Naive thymus-derived CD4-positive, alpha-beta T cell (primary cell): ENCODE measurements at regions of chr14 and their contacts with region 1.

Region 1: GRCh38 chr14:35404449-35405303 is at the start of gene NFKBIA:
- DNase-seq: peak; percentile 91 to 99 (median 93)
- ATAC-seq: peak; percentile 79
- H3K4me3 ChIP-seq: peak within 1 kb of the TSS; percentile 85
- H3K4me3 Mint-ChIP-seq: peak within 1 kb of the TSS; percentile 92 to 97 (median 94)
- H3K27ac ChIP-seq: peak within 1 kb of the TSS; percentile 96
- H3K27ac Mint-ChIP-seq: peak within 1 kb of the TSS; percentile 96 to 99 (median 98)
- H3K4me1 ChIP-seq: peaks cover 42 to 43% of the 10 kb centered on the region in 2 donors
- H3K4me1 Mint-ChIP-seq: peaks cover 28 to 63% (median 53%) of the 10 kb centered on the region in 7 donors
- H3K27me3 ChIP-seq: no peaks in the 10 kb centered on the region
- H3K27me3 Mint-ChIP-seq: peaks cover 0 to 2% (median 0%) of the 10 kb centered on the region in 5 donors
- total RNA-seq, gene NFKBIA: 144 to 1,533 (median 246) TPM

Region 2: GRCh38 chr14:34714320-34715126 is 690.2 kb before region 1 on chr14 and contains the start of gene CFL2:
- CTCF ChIA-PET with region 1: no interaction called
- POLR2A ChIA-PET with region 1: interaction called, 3 read pairs
- intact Hi-C with region 1: loop called in 1 of 2 experiments (anchors 5 kb)
- DNase-seq: peak; percentile 41 to 85 (median 54)
- ATAC-seq: peak; percentile 86
- H3K4me3 ChIP-seq: peak within 1 kb of the TSS; percentile 62
- H3K4me3 Mint-ChIP-seq: peak within 1 kb of the TSS; percentile 89 to 97 (median 92)
- H3K27ac ChIP-seq: peak within 1 kb of the TSS; percentile 93
- H3K27ac Mint-ChIP-seq: peak within 1 kb of the TSS; percentile 85 to 95 (median 92)
- H3K4me1 ChIP-seq: peaks cover 4 to 6% of the 10 kb centered on the region in 2 donors
- H3K4me1 Mint-ChIP-seq: peaks cover 8 to 39% (median 27%) of the 10 kb centered on the region in 7 donors
- H3K27me3 ChIP-seq: no peaks in the 10 kb centered on the region
- H3K27me3 Mint-ChIP-seq: peaks cover 0 to 20% (median 0%) of the 10 kb centered on the region in 5 donors
- total RNA-seq, gene CFL2: 5.2 to 34.2 (median 11.7) TPM

Region 3: DNA sequence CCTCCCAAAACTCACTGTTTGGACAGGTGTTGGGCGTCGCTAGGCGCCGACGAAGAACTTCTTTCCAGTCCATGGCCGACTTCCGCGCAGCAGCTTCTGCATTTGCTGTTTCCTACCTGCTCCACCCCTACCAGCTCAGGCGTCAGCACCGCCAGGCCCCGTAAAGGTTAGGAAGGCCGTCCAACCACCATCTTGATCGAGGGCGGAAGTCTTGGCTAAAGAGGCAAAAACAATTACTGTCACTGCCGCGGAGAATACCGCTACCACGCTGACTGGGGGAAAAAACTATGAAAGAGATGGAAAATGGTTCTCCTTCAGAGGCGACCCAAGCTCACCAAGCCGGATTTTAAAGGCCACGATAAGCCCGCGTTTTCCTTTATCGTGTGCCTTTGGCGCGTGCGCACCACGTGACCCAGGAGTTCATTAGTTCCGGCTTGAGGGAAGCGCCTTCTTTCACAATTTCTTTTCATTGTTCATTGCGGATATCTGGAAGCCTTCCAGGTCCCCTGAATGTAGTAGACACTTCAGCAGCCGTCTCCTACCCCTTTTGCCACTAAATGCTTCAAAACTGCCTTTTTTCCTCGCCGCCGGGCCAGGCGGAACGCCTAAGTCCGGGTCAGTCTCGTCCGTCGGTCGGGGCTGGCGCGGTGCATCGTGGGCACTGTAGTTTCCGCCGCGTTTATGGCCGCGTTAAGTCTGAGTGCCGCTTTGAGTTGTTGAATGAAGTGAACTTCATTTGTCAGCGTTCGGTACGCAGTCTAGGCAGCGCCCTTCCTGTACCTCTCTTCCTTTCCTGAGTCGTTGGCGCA is 282.6 kb before region 1 on chr14 and contains the starts of genes PPP2R3C and PRORP:
- CTCF ChIA-PET with region 1: interaction called, 3 read pairs
- POLR2A ChIA-PET with region 1: interaction called, 65 read pairs
- intact Hi-C with region 1: loop called (anchors 1 kb)
- DNase-seq: peak; percentile 80 to 96 (median 93)
- ATAC-seq: peak; percentile 90
- H3K4me3 ChIP-seq: peak within 1 kb of the TSS; percentile 86
- H3K4me3 Mint-ChIP-seq: peak within 1 kb of the TSS; percentile 89 to 100 (median 99)
- H3K27ac ChIP-seq: peak within 1 kb of the TSS; percentile 97
- H3K27ac Mint-ChIP-seq: peak within 1 kb of the TSS; percentile 99 to 100 (median 100)
- H3K4me1 ChIP-seq: peaks cover 16 to 22% of the 10 kb centered on the region in 2 donors
- H3K4me1 Mint-ChIP-seq: peaks cover 39 to 85% (median 73%) of the 10 kb centered on the region in 7 donors
- H3K27me3 ChIP-seq: no peaks in the 10 kb centered on the region
- H3K27me3 Mint-ChIP-seq: peaks cover 0 to 3% (median 0%) of the 10 kb centered on the region in 5 donors
- total RNA-seq, gene PPP2R3C: 31.4 to 43.3 (median 33.5) TPM
- total RNA-seq, gene PRORP: 31.2 to 40.9 (median 38.4) TPM

Region 4: GRCh38 chr14:35261774-35262173 is 142.9 kb before region 1 on chr14:
- CTCF ChIA-PET with region 1: interaction called, 3 read pairs
- POLR2A ChIA-PET with region 1: interaction called, 5 read pairs
- intact Hi-C with region 1: loop called in 1 of 2 experiments (anchors 1 kb)
- DNase-seq: peak in 4 of 9 donors; percentile 2 to 23 (median 10)
- ATAC-seq: no peak
- H3K4me3 ChIP-seq: no peak overlapping the region
- H3K4me3 Mint-ChIP-seq: no peak overlapping the region
- H3K27ac ChIP-seq: no peak overlapping the region
- H3K27ac Mint-ChIP-seq: peak overlapping the region in 1 of 9 donors; percentile 25
- H3K4me1 ChIP-seq: no peaks in the 10 kb centered on the region
- H3K4me1 Mint-ChIP-seq: peaks cover 0 to 12% (median 0%) of the 10 kb centered on the region in 7 donors
- H3K27me3 ChIP-seq: no peaks in the 10 kb centered on the region
- H3K27me3 Mint-ChIP-seq: no peaks in the 10 kb centered on the region

Region 5: GRCh38 chr14:35331605-35332516 is 72.8 kb before region 1 on chr14:
- CTCF ChIA-PET with region 1: interaction called, 4 read pairs
- POLR2A ChIA-PET with region 1: interaction called, 17 read pairs
- intact Hi-C with region 1: loop called (anchors 1 kb)
- DNase-seq: no peak
- ATAC-seq: peak; percentile 49
- H3K4me3 ChIP-seq: no peak overlapping the region
- H3K4me3 Mint-ChIP-seq: peak overlapping the region in 4 of 10 donors; percentile 26 to 73 (median 48)
- H3K27ac ChIP-seq: peak overlapping the region; percentile 53
- H3K27ac Mint-ChIP-seq: peak overlapping the region; percentile 88 to 96 (median 91)
- H3K4me1 ChIP-seq: peaks cover 17 to 21% of the 10 kb centered on the region in 2 donors
- H3K4me1 Mint-ChIP-seq: peaks cover 20 to 30% (median 26%) of the 10 kb centered on the region in 7 donors
- H3K27me3 ChIP-seq: no peaks in the 10 kb centered on the region
- H3K27me3 Mint-ChIP-seq: no peaks in the 10 kb centered on the region

Region 6: DNA sequence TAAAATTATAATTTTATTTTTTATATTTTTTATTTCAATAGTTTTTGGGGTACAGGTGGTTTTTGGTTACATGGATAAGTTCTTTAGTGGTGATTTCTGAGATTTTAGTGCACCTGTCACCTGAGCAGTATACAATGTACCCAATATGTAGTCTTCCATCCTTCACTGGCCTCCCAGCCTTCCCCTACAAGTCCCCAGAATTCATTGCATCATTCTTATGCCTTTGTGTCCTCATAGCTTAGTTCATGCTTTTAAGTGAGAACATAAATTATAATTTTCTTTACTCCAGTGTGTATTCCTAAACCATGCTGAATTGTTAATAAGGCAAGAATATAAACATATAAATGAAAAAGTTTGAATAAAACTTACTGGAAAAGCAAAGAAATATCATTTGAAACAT is 18.9 kb after region 1 on chr14:
- CTCF ChIA-PET with region 1: interaction called, 12 read pairs
- POLR2A ChIA-PET with region 1: interaction called, 11 read pairs
- intact Hi-C with region 1: loop called (anchors 1 to 2 kb)
- DNase-seq: no peak
- ATAC-seq: no peak
- H3K4me3 ChIP-seq: no peak overlapping the region
- H3K4me3 Mint-ChIP-seq: no peak overlapping the region
- H3K27ac ChIP-seq: no peak overlapping the region
- H3K27ac Mint-ChIP-seq: peak overlapping the region in 1 of 9 donors; percentile 49
- H3K4me1 ChIP-seq: peaks cover 0 to under 1% of the 10 kb centered on the region in 2 donors
- H3K4me1 Mint-ChIP-seq: peaks cover 0 to 9% (median 5%) of the 10 kb centered on the region in 7 donors
- H3K27me3 ChIP-seq: no peaks in the 10 kb centered on the region
- H3K27me3 Mint-ChIP-seq: no peaks in the 10 kb centered on the region

Region 7: DNA sequence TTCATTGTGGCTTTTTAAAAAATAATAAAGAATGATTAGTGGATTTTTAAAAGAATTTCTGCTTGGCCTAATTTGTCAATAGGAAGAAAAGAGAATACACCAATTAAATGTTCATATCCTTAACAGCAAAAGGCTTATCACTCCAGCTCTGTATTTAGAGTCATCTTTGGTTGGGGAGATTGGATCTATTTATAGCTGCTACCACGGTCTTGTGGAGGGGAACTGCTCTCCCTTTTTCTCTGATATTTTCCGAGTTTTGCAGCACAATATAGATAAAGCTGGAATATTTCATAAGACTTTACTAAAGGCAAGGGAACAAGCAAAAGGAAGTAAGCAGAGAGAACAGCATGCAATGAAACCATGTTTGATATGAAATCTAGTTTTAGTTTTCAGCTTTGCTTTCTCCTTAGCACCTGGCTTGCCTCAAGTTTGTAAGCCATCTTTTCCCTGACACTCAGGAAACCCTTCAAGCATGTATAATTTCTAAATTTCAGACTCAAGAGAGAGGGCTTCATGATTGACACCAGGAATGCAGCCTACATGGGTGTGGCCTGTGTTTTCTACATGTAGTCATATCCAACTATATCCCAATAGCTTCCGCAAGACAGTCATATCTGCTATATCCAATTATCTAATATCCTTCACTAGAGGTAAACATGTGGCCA is 456.7 kb after region 1 on chr14:
- CTCF ChIA-PET with region 1: no interaction called
- POLR2A ChIA-PET with region 1: no interaction called
- intact Hi-C with region 1: no loop called
- DNase-seq: no peak
- ATAC-seq: no peak
- H3K4me3 ChIP-seq: no peak overlapping the region
- H3K4me3 Mint-ChIP-seq: no peak overlapping the region
- H3K27ac ChIP-seq: no peak overlapping the region
- H3K27ac Mint-ChIP-seq: no peak overlapping the region
- H3K4me1 ChIP-seq: no peaks in the 10 kb centered on the region
- H3K4me1 Mint-ChIP-seq: peaks cover 0 to 4% (median 0%) of the 10 kb centered on the region in 7 donors
- H3K27me3 ChIP-seq: no peaks in the 10 kb centered on the region
- H3K27me3 Mint-ChIP-seq: no peaks in the 10 kb centered on the region

Region 8: GRCh38 chr14:36676236-36676635 is 1271.6 kb after region 1 on chr14:
- CTCF ChIA-PET with region 1: no interaction called
- POLR2A ChIA-PET with region 1: no interaction called
- intact Hi-C with region 1: no loop called
- DNase-seq: no peak
- ATAC-seq: no peak
- H3K4me3 ChIP-seq: no peak overlapping the region
- H3K4me3 Mint-ChIP-seq: no peak overlapping the region
- H3K27ac ChIP-seq: no peak overlapping the region
- H3K27ac Mint-ChIP-seq: no peak overlapping the region
- H3K4me1 ChIP-seq: no peaks in the 10 kb centered on the region
- H3K4me1 Mint-ChIP-seq: no peaks in the 10 kb centered on the region
- H3K27me3 ChIP-seq: no peaks in the 10 kb centered on the region
- H3K27me3 Mint-ChIP-seq: peaks cover 10 to 35% (median 27%) of the 10 kb centered on the region in 5 donors